ENCODE measurements at regions of chr9 and their contacts with region 1.

Region 1: GRCh38 chr9:94029932-94030317 is 54.3 kb upstream of the PTPDC1 start:
- DNase-seq: no peak
- ATAC-seq: no peak

Region 2: GRCh38 chr9:92942688-92943616 is 1087.0 kb before region 1 on chr9:
- intact Hi-C with region 1: no loop called
- DNase-seq: no peak
- ATAC-seq: no peak

Region 3: DNA sequence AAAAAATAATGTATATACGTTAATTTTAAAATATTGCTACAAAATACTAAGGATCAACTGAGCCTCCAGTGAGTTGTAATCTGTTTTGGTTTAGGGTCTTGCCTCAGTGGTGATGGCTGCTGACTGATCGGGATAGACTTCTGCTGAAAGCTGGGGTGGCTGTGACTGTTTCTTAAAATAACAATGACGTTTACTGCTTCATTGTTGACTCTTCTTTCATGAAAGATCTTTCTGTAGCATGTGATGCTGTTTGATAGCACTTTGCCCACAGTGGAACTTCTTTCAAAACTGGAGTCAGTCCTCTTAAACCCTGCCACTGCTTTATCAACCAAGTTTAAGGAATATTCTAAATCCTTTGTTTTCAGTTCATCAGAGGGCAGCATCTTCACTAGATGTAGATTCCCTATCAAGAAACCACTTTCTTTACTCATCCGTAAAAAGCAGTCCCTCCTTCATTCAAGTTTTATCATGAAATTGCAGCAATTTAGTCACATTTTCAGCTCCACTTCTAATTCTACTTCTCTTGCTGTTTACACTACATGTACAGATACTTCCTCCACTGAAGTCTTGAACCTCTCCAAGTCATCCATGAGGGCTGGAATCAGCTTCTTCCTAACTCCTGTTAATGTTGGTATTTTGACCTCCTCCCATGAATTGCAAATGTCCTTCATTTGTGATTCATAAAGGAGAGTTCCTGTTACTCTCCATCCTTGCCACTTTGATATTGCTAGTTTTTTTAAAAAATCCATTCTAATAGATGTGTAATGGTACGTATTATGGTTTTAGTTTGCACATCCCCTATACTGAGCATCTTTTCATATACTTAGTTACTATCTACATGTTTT is 12.8 kb after region 1 on chr9:
- intact Hi-C with region 1: loop called (anchors 1 kb)
- DNase-seq: no peak
- ATAC-seq: no peak

Region 4: DNA sequence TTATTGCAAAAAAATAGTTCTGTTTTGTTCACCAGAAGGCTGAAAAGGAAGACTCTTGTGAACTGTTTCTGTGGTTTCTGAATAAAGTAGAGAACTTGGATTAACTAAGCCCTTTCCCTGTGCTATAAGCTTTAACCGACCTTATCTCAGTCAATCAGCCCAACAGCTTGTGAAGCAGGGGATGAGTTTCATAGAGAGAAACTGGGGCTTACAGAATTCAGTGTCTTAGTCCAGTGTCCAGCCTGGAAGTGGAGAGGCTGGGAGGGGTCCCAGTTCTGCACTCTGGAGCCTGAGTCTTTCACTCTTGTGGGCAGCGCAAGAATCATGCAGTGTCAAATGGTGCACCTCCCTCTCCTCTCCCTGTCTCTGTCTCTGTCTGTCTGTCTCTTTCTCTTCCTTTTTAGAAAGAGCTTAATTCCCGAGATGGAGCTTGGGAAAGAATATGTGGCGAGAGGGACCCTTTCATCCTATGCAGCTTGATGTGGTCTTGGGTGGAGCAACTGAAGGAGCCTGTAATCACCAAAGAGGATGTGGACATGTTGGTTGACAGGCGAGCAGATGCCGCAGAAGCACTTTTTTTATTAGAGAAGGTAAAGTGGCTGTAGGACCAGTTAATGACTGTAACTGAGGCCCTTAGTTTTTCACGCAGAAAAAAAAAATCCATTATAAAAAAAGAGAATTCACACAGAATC is 71.4 kb after region 1 on chr9:
- intact Hi-C with region 1: loop called (anchors 2 kb)
- DNase-seq: no peak
- ATAC-seq: no peak